ENCODE measurements at regions of chr14 and their contacts with region 1.

Region 1: DNA sequence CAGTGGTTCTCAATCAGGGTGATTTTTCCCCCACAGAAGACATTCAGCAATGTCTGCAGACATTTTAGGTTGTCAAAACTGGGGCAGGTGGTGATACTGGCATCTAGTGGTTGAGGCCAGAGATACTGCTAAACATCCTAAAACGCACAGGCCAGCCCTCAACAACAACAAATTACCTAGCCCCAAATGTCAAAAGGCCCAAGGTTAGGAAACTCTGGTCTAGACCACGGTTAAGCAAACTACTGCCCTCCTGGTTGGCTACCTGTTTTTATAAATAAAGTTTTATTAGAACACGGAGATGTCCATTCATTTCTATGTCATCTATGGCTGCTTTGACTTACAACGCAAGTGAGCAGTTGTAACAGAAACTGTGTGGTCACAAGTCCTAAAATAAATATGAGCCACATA is 186.7 kb downstream of the EFCAB11 start:
- DNase-seq: peak; percentile 46
- H3K4me3 Mint-ChIP-seq: no peak overlapping the region
- H3K27ac Mint-ChIP-seq: peak overlapping the region; percentile 35
- H3K4me1 Mint-ChIP-seq: peaks cover 15% of the 10 kb centered on the region
- H3K27me3 Mint-ChIP-seq: peaks cover 19% of the 10 kb centered on the region

Region 2: DNA sequence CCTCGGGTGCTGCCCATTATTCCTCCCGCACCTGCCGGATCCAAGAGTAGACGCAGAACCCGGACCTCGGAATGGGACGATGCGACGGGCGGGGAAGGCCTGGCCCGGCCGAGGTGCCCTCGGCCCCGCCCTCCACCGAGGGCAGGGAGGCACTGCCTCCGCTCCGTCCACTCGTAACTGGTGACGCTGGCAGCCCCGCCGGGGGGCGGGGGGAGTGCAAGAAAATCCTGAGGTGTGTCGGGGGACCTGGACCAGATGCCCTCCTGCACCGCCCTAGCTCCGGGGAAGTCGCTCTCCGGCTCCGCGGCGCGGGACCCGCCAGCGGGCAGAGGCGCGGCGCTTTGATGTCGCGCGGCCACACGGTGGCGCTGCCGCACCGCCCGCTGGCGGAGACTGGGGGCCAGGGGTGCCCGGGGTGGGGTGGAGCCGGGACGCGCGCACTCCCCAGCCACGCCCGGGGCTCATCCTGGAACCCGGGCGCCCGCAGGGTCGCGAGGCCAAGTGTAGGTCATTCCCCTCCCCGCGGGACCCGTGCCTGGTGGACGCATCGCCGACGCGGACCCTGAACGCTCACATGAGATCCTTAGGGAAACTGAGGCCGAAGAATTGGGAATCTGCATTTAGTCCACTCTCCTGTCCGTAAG is 740.6 kb before region 1 on chr14:
- intact Hi-C with region 1: loop called (anchors 5 kb)
- DNase-seq: peak; percentile 36
- H3K4me3 Mint-ChIP-seq: peak overlapping the region; percentile 64
- H3K27ac Mint-ChIP-seq: no peak overlapping the region
- H3K4me1 Mint-ChIP-seq: peaks cover 7% of the 10 kb centered on the region
- H3K27me3 Mint-ChIP-seq: peaks cover 49% of the 10 kb centered on the region

Region 3: GRCh38 chr14:89178802-89179535 is 588.9 kb before region 1 on chr14:
- intact Hi-C with region 1: loop called (anchors 1 kb)
- DNase-seq: no peak
- H3K4me3 Mint-ChIP-seq: no peak overlapping the region
- H3K27ac Mint-ChIP-seq: peak overlapping the region; percentile 25
- H3K4me1 Mint-ChIP-seq: peaks cover 6% of the 10 kb centered on the region
- H3K27me3 Mint-ChIP-seq: no peaks in the 10 kb centered on the region

Region 4: DNA sequence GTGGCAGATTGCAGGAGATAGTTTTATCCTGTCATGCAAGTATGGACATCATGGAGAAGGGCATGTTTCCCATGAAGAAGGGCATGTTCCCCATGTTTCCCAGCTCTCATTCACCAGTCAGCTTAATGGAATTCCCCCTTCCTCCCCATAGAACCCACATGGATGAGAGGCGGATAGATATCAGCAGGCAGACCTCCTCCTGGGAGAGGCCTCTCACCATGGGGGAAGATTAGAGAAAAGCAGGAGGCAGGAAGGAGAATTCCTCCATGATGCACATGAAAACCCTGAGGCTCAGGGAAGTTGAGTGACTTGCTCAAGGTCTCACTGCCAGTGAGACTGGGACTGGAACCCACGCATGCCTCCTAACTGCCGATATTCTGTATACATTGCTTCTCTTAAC is 258.0 kb before region 1 on chr14:
- intact Hi-C with region 1: loop called (anchors 2 kb)
- DNase-seq: no peak
- H3K4me3 Mint-ChIP-seq: peak overlapping the region; percentile 76
- H3K27ac Mint-ChIP-seq: peak overlapping the region; percentile 93
- H3K4me1 Mint-ChIP-seq: peaks cover 63% of the 10 kb centered on the region
- H3K27me3 Mint-ChIP-seq: no peaks in the 10 kb centered on the region

Region 5: GRCh38 chr14:89681086-89682018 is 86.5 kb before region 1 on chr14:
- intact Hi-C with region 1: loop called (anchors 2 kb)
- DNase-seq: peak; percentile 22
- H3K4me3 Mint-ChIP-seq: peak overlapping the region; percentile 66
- H3K27ac Mint-ChIP-seq: peak overlapping the region; percentile 89
- H3K4me1 Mint-ChIP-seq: peaks cover 45% of the 10 kb centered on the region
- H3K27me3 Mint-ChIP-seq: no peaks in the 10 kb centered on the region

Region 6: GRCh38 chr14:89915114-89915878 is 147.4 kb after region 1 on chr14:
- intact Hi-C with region 1: loop called (anchors 1 kb)
- DNase-seq: peak; percentile 38
- H3K4me3 Mint-ChIP-seq: no peak overlapping the region
- H3K27ac Mint-ChIP-seq: no peak overlapping the region
- H3K4me1 Mint-ChIP-seq: peaks cover 4% of the 10 kb centered on the region
- H3K27me3 Mint-ChIP-seq: peaks cover 12% of the 10 kb centered on the region

Measured in activated T-helper 1 cell treated with anti-CD3 and anti-CD28 coated beads, Interleukin-12 subunit alpha, Interleukin-12 subunit beta, Interleukin-2, Interleukin-4 antibody, amounts not matched to agents 30 ng/mL and 10 ng/mL and 1 ng/mL, durations not matched to agents 14 hours and 24 hours and 36 hours (primary cell).